ENCODE measurements at regions of chr16 and their contacts with region 1.

Region 1: DNA sequence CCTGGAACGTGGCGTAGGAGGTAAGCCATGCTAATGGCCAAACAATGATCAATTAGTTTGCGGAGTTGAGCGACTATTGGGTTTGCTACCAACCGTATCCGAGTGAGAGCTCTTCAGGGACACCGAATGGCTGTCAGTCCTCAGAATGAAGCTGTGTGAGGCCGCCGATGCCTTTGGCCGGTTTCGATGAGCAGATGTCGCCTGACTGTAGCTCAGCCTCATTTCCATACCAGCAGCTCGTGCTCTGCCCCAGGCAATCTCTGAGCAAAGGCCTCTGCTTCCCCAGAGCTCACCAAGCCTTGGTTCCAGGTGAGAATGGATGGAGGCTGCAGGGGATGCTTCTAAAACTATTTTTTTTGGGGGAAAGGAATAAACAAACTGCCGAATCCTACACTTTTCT is 111.7 kb upstream of the HS3ST4 start:
- DNase-seq: no peak
- H3K4me3 ChIP-seq: no peak overlapping the region
- H3K27ac ChIP-seq: no peak overlapping the region
- H3K4me1 ChIP-seq: no peaks in the 10 kb centered on the region
- H3K27me3 ChIP-seq: no peaks in the 10 kb centered on the region
- CTCF ChIP-seq: no peak
- POLR2A ChIP-seq: no peak

Region 2: GRCh38 chr16:25235991-25236390 is 344.1 kb before region 1 on chr16:
- intact Hi-C with region 1: no loop called
- DNase-seq: no peak
- H3K4me3 ChIP-seq: no peak overlapping the region
- H3K27ac ChIP-seq: no peak overlapping the region
- H3K4me1 ChIP-seq: peaks cover 0 to 6% (median 3%) of the 10 kb centered on the region in 6 donors
- H3K27me3 ChIP-seq: no peaks in the 10 kb centered on the region
- CTCF ChIP-seq: no peak
- POLR2A ChIP-seq: no peak

Region 3: GRCh38 chr16:25523183-25523582 is 56.9 kb before region 1 on chr16:
- intact Hi-C with region 1: no loop called
- DNase-seq: no peak
- H3K4me3 ChIP-seq: no peak overlapping the region
- H3K27ac ChIP-seq: no peak overlapping the region
- H3K4me1 ChIP-seq: no peaks in the 10 kb centered on the region
- H3K27me3 ChIP-seq: peaks cover 0 to 6% (median 0%) of the 10 kb centered on the region in 7 donors
- CTCF ChIP-seq: no peak
- POLR2A ChIP-seq: no peak

Region 4: DNA sequence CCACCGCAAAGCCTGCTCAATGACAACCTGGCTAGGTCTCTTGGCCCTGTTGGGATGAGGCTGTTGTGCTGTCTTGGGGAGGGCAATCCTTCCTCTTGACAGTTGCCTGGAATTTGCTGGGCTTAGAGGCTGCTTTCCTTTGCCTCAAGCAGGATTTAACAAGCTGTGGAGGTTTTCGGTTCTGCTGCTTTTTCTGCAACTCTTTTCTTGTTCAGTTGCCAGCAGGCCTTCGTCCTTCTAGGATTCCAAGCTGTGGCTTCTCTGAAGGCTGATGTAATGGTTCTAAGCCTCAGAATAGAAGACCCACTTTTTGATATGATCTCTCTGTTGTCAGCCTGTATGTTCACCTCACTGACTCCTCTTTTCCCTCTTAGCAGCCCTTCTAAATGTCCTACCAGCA is 37.7 kb before region 1 on chr16:
- intact Hi-C with region 1: loop called (anchors 10 kb)
- DNase-seq: no peak
- H3K4me3 ChIP-seq: no peak overlapping the region
- H3K27ac ChIP-seq: no peak overlapping the region
- H3K4me1 ChIP-seq: peaks cover 0 to 13% (median 0%) of the 10 kb centered on the region in 6 donors
- H3K27me3 ChIP-seq: no peaks in the 10 kb centered on the region
- CTCF ChIP-seq: no peak
- POLR2A ChIP-seq: no peak

Region 5: GRCh38 chr16:25875956-25876598 is 296.0 kb after region 1 on chr16:
- intact Hi-C with region 1: no loop called
- DNase-seq: no peak
- H3K4me3 ChIP-seq: no peak overlapping the region
- H3K27ac ChIP-seq: no peak overlapping the region
- H3K4me1 ChIP-seq: no peaks in the 10 kb centered on the region
- H3K27me3 ChIP-seq: peaks cover 0 to 21% (median 0%) of the 10 kb centered on the region in 7 donors
- CTCF ChIP-seq: no peak
- POLR2A ChIP-seq: no peak

Measured in spleen (tissue), 13 donors.